ENCODE measurements at regions of chrX and their contacts with region 1.

Region 1: GRCh38 chrX:13283950-13284914 is 35.6 kb downstream of the ATXN3L start:
- DNase-seq: peak; percentile 84
- H3K4me3 ChIP-seq: no peak overlapping the region
- H3K27ac ChIP-seq: peak overlapping the region; percentile 87
- H3K4me1 ChIP-seq: peaks cover 37% of the 10 kb centered on the region
- H3K27me3 ChIP-seq: no peaks in the 10 kb centered on the region
- CTCF ChIP-seq: no peak

Region 2: DNA sequence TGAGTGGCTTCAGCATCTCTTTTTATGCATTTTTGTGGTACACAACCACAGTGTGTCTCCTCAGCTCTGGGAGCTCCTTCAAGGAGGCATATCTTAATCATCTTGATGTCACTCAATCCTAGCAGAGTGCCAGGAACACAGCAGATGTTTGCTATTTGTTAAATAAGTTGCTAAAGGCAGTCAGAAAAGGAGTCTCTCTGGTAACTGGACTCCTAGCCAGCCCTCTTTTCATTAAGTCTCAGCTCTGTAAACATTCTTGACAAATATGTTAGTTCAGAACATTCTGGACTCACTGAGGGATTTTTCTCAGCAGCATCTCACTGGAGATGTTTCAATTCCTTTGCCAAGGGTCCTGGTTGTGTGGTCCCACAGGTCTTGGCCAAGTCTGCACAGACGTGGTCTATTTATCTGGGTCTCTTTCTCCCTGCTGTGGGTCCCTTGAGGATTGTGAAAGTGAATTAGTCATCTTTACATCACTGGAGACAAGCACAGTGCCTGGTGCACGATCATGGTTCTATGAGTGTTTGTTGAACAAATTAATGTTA is 219.6 kb before region 1 on chrX:
- CTCF ChIA-PET with region 1: no interaction called
- dilution Hi-C with region 1: no loop called
- in situ Hi-C with region 1: no loop called
- intact Hi-C with region 1: no loop called
- DNase-seq: no peak
- H3K4me3 ChIP-seq: no peak overlapping the region
- H3K27ac ChIP-seq: no peak overlapping the region
- H3K4me1 ChIP-seq: peaks cover 2% of the 10 kb centered on the region
- H3K27me3 ChIP-seq: no peaks in the 10 kb centered on the region
- CTCF ChIP-seq: no peak

Region 3: GRCh38 chrX:13087322-13088155 is 196.7 kb before region 1 on chrX:
- CTCF ChIA-PET with region 1: no interaction called
- dilution Hi-C with region 1: no loop called
- in situ Hi-C with region 1: no loop called
- intact Hi-C with region 1: loop called (anchors 10 kb)
- DNase-seq: peak; percentile 95
- H3K4me3 ChIP-seq: no peak overlapping the region
- H3K27ac ChIP-seq: peak overlapping the region; percentile 72
- H3K4me1 ChIP-seq: peaks cover 9% of the 10 kb centered on the region
- H3K27me3 ChIP-seq: no peaks in the 10 kb centered on the region
- CTCF ChIP-seq: no peak

Region 4: DNA sequence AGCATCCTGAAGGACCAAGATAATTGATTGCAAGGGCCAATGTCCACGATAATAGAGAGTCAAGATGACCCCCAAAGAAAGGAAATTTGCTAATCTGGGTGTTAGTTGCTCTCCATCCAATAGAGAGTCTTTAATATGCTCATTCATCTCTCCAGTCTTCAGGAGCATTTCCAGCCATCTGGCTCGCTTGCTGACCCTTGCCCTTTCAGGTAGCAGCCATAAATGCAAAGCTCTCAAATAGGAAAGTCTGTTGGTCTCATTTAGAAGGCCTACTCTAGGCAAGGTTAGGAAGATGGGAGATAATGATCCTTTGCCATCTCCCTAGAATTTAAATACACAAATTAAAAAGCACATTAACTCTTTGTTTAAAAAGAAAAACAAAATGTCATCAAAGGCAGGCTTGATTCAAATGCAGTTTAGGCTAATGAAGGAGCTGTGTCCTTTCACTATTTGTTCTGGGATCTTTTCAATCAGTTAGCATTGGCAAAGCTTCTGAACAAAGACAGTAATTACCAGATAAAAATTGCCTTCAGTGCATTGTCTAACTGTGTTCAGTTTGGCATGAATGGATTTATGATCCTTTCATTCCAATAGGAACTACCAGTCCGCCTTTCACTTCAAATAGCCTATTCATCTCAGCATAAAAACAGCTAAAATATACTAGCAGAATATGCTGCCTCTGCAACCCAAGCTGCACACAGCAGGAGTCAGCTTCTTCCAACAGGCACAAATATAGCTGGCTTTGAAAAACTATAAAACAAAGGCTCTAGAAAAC is 85.2 kb after region 1 on chrX:
- CTCF ChIA-PET with region 1: no interaction called
- dilution Hi-C with region 1: loop called (anchors 5 kb)
- in situ Hi-C with region 1: no loop called
- intact Hi-C with region 1: no loop called
- DNase-seq: no peak
- H3K4me3 ChIP-seq: no peak overlapping the region
- H3K27ac ChIP-seq: no peak overlapping the region
- H3K4me1 ChIP-seq: peaks cover 16% of the 10 kb centered on the region
- H3K27me3 ChIP-seq: no peaks in the 10 kb centered on the region
- CTCF ChIP-seq: no peak

Region 5: DNA sequence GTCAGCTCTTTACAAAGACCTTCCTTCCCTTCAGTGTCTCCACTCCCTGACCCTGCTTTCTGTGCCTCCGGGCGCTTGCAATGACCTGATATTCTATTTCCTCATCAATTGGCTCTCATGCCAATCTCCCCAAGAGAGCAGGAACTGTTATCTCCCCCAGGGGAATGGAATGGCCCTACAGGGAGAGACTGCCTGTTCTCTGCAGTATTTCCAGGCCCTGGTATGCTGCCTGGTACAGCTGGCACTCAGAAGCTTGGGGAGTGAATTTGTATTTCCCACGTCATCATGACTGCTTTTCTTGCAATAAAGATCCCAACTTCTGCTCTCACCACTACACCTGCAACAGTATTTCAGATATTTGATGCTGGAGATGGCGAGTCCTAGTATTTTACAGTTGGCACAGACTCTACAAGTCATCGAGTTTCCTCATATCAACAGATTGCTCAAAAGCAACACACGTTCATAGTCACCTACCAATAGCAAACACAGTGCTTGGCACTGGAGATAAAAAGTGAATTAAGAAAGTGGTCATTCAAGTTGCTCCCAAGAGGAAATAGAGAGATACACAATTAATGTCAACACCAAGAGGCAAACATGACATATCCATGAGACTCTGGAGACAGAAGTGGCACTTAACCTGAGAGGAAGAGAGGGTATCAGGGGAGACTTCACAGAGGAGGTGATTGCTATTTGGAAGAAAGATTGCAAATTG is 194.7 kb after region 1 on chrX:
- CTCF ChIA-PET with region 1: no interaction called
- dilution Hi-C with region 1: loop called (anchors 5 kb)
- in situ Hi-C with region 1: no loop called
- intact Hi-C with region 1: no loop called
- DNase-seq: no peak
- H3K4me3 ChIP-seq: no peak overlapping the region
- H3K27ac ChIP-seq: no peak overlapping the region
- H3K4me1 ChIP-seq: no peaks in the 10 kb centered on the region
- H3K27me3 ChIP-seq: no peaks in the 10 kb centered on the region
- CTCF ChIP-seq: no peak

Measured in mammary epithelial cell (primary cell).